ENCODE measurements at regions of chr1 and their contacts with region 1.

Region 1: DNA sequence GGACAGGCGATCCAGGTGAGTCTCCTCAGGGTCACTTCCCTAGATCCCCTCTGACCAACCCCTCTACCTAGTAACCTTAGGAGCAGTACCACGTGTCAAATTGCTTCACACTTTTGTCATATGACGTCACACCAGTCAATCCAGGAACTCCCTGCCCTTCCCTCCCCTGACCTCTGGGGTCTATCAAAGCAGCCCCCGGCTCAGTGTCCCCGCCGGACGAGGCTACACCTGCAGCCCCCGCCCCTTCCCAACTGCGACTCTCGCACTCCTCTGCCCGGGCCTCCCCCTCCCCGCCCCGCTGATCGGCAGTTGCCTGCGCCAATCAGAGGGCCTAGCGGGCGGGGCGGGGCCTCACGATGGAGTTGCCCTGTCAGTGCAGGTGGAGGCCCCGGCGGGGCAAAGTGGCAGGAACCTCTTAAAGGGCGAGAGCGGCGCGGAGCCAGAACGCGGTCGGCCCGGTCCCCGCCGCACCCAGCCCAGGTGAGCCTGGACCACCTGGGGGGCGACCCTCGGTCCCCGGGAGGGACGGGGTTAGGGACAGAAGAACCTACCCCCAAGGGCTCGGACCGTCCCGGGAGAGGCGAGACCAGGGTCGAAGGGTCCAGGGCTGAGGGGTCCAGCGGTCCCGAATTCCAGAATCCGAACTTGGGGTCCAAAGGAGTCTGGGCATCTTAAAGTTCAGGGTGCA is 27.5 kb upstream of the EPB41 start:
- DNase-seq: peak; percentile 93 to 94 (median 94)
- ATAC-seq: peak; percentile 73 to 84 (median 80)
- H3K4me3 ChIP-seq: peak overlapping the region; percentile 58 to 94 (median 85)
- H3K27ac ChIP-seq: peak overlapping the region; percentile 62 to 87 (median 84)
- H3K4me1 ChIP-seq: peaks cover 0 to 25% (median 9%) of the 10 kb centered on the region in 4 donors
- H3K27me3 ChIP-seq: no peaks in the 10 kb centered on the region
- CTCF ChIP-seq: no peak
- POLR2A ChIP-seq: peak; percentile 90

Region 2: DNA sequence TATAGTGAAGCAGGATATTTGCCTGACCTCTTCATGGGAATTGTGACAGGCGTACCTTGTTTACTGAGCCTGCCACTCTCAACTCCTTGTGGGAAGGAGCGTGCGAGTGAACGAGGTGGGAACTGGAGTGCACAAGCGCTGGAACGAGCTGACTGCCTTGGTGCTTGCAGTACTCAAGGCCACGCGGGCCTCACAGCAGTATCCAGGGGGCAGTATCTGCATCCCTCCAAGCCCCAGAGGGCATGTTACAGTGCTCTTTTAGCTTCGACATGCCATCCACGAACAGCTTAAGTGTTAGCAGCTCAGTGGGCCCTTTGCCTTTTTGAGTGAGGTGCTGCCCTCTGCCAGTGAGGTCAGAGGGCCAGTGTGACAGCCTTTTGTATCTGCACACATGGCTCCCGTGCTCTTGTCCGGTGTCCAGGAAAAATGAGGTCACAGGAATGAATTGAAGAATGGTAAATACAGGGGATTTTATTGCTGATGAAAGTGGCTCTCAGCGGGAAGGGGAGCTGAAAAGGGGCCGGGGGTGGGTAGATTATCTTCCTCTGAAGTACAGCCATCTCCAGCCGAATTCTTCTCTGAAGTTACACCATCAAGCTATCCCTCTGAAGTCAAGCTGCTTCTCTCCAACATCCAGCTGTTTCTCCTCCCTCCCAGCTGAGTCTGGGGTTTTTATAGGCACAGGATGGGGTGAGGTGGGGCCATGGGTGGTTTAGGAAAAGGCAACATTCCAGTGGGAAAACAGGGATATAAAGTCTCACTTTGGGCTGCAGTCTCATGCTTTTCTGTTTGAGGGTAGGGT is 96.8 kb after region 1 on chr1:
- intact Hi-C with region 1: loop called in 1 of 2 experiments (anchors 5 kb)
- DNase-seq: peak; percentile 73 to 86 (median 81)
- ATAC-seq: peak; percentile 91 to 97 (median 94)
- H3K4me3 ChIP-seq: no peak overlapping the region
- H3K27ac ChIP-seq: peak overlapping the region; percentile 78 to 85 (median 82)
- H3K4me1 ChIP-seq: peaks cover 0 to 22% (median 0%) of the 10 kb centered on the region in 4 donors
- H3K27me3 ChIP-seq: no peaks in the 10 kb centered on the region
- CTCF ChIP-seq: peak; percentile 31 to 42 (median 37)
- POLR2A ChIP-seq: no peak

Region 3: DNA sequence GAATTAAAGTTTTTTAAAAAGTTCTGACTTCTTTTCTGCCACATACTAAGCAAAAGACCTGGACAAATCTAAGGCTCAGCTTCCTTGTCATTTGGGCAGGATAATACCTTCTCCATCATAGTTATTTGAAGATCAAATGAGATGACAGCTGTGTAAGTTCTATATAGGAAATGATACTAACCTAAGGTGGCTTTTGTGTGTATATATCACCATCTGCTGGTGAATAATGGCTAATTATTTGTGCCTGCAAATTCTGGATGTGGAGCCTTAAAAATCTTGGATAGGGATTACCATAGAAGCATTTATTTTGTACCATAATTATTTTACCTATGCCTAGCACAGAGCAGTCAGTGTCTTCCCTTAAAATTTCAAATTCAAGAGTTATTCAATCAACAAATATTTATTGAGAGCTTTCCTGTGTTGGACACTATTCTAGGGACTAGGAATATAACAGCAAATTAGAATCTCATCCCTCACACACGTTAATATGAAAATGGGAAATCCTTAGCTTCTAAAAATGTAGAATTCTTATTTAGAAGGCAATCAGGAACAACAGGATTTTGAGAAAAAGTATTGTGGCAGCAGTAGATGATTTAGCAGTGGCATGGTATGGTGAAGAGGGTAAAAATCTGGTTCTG is 147.1 kb after region 1 on chr1:
- intact Hi-C with region 1: loop called in 1 of 2 experiments (anchors 5 kb)
- DNase-seq: no peak
- ATAC-seq: peak; percentile 66 to 81 (median 74)
- H3K4me3 ChIP-seq: no peak overlapping the region
- H3K27ac ChIP-seq: no peak overlapping the region
- H3K4me1 ChIP-seq: no peaks in the 10 kb centered on the region
- H3K27me3 ChIP-seq: no peaks in the 10 kb centered on the region
- CTCF ChIP-seq: peak; percentile 60 to 77 (median 64)
- POLR2A ChIP-seq: no peak

Region 4: GRCh38 chr1:29202584-29203340 is 315.9 kb after region 1 on chr1:
- intact Hi-C with region 1: loop called (anchors 5 to 10 kb)
- DNase-seq: peak; percentile 91 to 93 (median 93)
- ATAC-seq: peak; percentile 95 to 99 (median 96)
- H3K4me3 ChIP-seq: no peak overlapping the region
- H3K27ac ChIP-seq: peak overlapping the region in 1 of 3 donors; percentile 29
- H3K4me1 ChIP-seq: peaks cover 0 to 6% (median 3%) of the 10 kb centered on the region in 4 donors
- H3K27me3 ChIP-seq: no peaks in the 10 kb centered on the region
- CTCF ChIP-seq: peak; percentile 96 to 99 (median 96)
- POLR2A ChIP-seq: no peak

Measured in right lobe of liver (tissue), 6 donors.